CD14-positive monocyte (primary cell): ENCODE measurements at regions of chr1 and their contacts with region 1.

Region 1: GRCh38 chr1:16009030-16009709 is 5.1 kb downstream of the SRARP start:
- DNase-seq: peak; percentile 49 to 70 (median 65)
- H3K4me3 ChIP-seq: no peak overlapping the region
- H3K4me3 Mint-ChIP-seq: no peak overlapping the region
- H3K27ac ChIP-seq: no peak overlapping the region
- H3K27ac Mint-ChIP-seq: peak overlapping the region in 1 of 7 donors; percentile 42
- H3K4me1 ChIP-seq: peaks cover 13 to 15% of the 10 kb centered on the region in 2 donors
- H3K4me1 Mint-ChIP-seq: peaks cover 9% of the 10 kb centered on the region
- H3K27me3 ChIP-seq: no peaks in the 10 kb centered on the region
- H3K27me3 Mint-ChIP-seq: peaks cover 6 to 11% (median 6%) of the 10 kb centered on the region in 3 donors
- CTCF ChIP-seq: peak; percentile 99

Region 2: GRCh38 chr1:15994590-15995351 is 14.4 kb before region 1 on chr1:
- intact Hi-C with region 1: no loop called
- DNase-seq: peak; percentile 46 to 65 (median 51)
- H3K4me3 ChIP-seq: no peak overlapping the region
- H3K4me3 Mint-ChIP-seq: no peak overlapping the region
- H3K27ac ChIP-seq: no peak overlapping the region
- H3K27ac Mint-ChIP-seq: no peak overlapping the region
- H3K4me1 ChIP-seq: no peaks in the 10 kb centered on the region
- H3K4me1 Mint-ChIP-seq: no peaks in the 10 kb centered on the region
- H3K27me3 ChIP-seq: no peaks in the 10 kb centered on the region
- H3K27me3 Mint-ChIP-seq: peaks cover 0 to 5% (median 0%) of the 10 kb centered on the region in 3 donors
- CTCF ChIP-seq: peak; percentile 86

Region 3: GRCh38 chr1:16032388-16033103 is 23.4 kb after region 1 on chr1:
- intact Hi-C with region 1: loop called in 1 of 2 experiments (anchors 2 kb)
- DNase-seq: peak; percentile 60 to 77 (median 70)
- H3K4me3 ChIP-seq: no peak overlapping the region
- H3K4me3 Mint-ChIP-seq: no peak overlapping the region
- H3K27ac ChIP-seq: no peak overlapping the region
- H3K27ac Mint-ChIP-seq: peak overlapping the region in 1 of 7 donors; percentile 40
- H3K4me1 ChIP-seq: no peaks in the 10 kb centered on the region
- H3K4me1 Mint-ChIP-seq: peaks cover 4% of the 10 kb centered on the region
- H3K27me3 ChIP-seq: peaks cover 0 to 5% of the 10 kb centered on the region in 2 donors
- H3K27me3 Mint-ChIP-seq: peaks cover 4 to 21% (median 8%) of the 10 kb centered on the region in 3 donors
- CTCF ChIP-seq: peak; percentile 91

Region 4: GRCh38 chr1:16055613-16056520 is 46.7 kb after region 1 on chr1:
- intact Hi-C with region 1: loop called (anchors 2 kb)
- DNase-seq: peak; percentile 56 to 69 (median 61)
- H3K4me3 ChIP-seq: no peak overlapping the region
- H3K4me3 Mint-ChIP-seq: no peak overlapping the region
- H3K27ac ChIP-seq: no peak overlapping the region
- H3K27ac Mint-ChIP-seq: no peak overlapping the region
- H3K4me1 ChIP-seq: peaks cover 0 to 3% of the 10 kb centered on the region in 2 donors
- H3K4me1 Mint-ChIP-seq: peaks cover 4% of the 10 kb centered on the region
- H3K27me3 ChIP-seq: no peaks in the 10 kb centered on the region
- H3K27me3 Mint-ChIP-seq: peaks cover 2 to 10% (median 5%) of the 10 kb centered on the region in 3 donors
- CTCF ChIP-seq: peak; percentile 98

Region 5: GRCh38 chr1:16187748-16188401 is 178.7 kb after region 1 on chr1:
- intact Hi-C with region 1: loop called (anchors 10 kb)
- DNase-seq: peak; percentile 44 to 66 (median 57)
- H3K4me3 ChIP-seq: no peak overlapping the region
- H3K4me3 Mint-ChIP-seq: peak overlapping the region in 1 of 2 donors; percentile 11
- H3K27ac ChIP-seq: no peak overlapping the region
- H3K27ac Mint-ChIP-seq: no peak overlapping the region
- H3K4me1 ChIP-seq: no peaks in the 10 kb centered on the region
- H3K4me1 Mint-ChIP-seq: peaks cover 2% of the 10 kb centered on the region
- H3K27me3 ChIP-seq: no peaks in the 10 kb centered on the region
- H3K27me3 Mint-ChIP-seq: peaks cover 2 to 23% (median 10%) of the 10 kb centered on the region in 3 donors
- CTCF ChIP-seq: peak; percentile 91